ENCODE measurements at regions of chrX and their contacts with region 1.

Region 1: DNA sequence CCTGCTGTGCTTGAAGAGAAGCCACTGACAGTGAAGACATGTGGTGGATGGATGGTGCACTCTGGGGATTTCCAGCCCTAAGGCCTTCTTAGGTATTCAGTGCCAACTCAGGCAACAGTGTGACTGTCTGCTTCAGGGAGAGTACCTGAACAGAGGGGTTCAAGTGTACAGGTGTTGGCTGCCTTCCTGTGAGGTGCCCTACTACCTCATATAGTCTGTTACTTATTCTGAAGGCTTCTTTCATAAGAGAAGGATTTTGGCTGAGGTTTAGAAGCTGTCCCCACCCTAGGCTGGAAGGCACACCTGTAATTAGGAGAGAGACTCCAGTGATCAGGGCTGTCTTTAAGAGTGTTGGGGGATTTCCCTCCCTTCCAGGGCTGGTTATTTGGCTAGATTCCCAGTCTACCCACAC is 1.8 kb downstream of the FTHL17 start:
- DNase-seq: peak; percentile 4

Region 2: DNA sequence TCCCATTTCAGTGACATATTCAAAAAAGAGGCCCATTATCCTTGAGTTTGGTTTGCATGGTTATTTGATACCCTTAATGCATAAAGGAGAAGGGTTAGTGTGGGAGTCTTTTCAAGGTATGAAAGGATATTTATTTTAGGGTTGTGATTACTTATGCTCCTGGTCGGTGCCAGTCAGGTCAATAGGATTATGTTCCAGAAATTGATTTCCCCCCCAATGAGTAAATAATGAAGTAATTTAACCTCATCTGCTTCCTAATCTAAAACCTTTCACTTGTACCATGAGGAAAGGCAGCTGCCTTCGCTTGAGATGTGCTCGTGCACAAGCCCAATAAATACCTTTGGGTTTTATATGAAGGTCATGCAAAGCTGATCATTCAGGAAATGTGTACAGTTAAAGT is 705.8 kb before region 1 on chrX:
- in situ Hi-C with region 1: no loop called
- DNase-seq: no peak

Region 3: GRCh38 chrX:30971774-30972603 is 98.1 kb before region 1 on chrX:
- in situ Hi-C with region 1: loop called (anchors 25 kb)
- DNase-seq: peak; percentile 69

Measured in KBM-7 (cell line).